ENCODE measurements at regions of chr16 and their contacts with region 1.

Region 1: GRCh38 chr16:57091975-57092785 is at the start of gene CPNE2:
- DNase-seq: peak; percentile 55 to 96 (median 68)

Region 2: GRCh38 chr16:57115514-57116182 is 23.5 kb after region 1 on chr16:
- intact Hi-C with region 1: loop called (anchors 2 kb)
- DNase-seq: peak; percentile 70 to 98 (median 84)

Region 3: GRCh38 chr16:57185944-57186871 is 94.0 kb after region 1 on chr16 and contains the starts of genes PSME3IP1 and RSPRY1:
- intact Hi-C with region 1: loop called (anchors 5 kb)
- DNase-seq: peak; percentile 97 to 100 (median 99)

Region 4: DNA sequence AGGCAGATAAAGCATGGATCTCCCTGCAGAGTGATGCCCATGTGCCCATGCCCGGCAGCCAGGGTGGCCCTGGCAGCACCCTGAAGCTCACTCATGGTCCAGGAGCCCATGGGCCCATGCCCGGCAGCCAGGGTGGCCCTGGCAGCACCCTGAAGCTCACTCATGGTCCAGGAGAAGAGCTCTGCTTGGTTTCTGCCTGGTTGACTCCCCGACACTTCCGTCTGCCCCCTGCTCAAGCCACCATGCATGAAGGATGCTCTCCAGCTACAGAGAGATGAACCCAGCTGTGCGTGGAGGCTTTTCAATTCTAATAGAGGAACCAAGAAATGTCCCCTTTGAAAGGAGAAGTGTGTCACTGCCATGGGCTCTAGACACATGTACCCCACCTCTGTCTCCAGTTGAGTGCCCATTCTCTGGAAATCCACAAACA is 321.1 kb after region 1 on chr16:
- intact Hi-C with region 1: loop called (anchors 5 kb)
- DNase-seq: no peak

Measured in posterior cingulate gyrus (tissue), 11 donors.